Endothelial cell of umbilical vein (primary cell): ENCODE measurements at regions of chr11 and their contacts with region 1.

Region 1: DNA sequence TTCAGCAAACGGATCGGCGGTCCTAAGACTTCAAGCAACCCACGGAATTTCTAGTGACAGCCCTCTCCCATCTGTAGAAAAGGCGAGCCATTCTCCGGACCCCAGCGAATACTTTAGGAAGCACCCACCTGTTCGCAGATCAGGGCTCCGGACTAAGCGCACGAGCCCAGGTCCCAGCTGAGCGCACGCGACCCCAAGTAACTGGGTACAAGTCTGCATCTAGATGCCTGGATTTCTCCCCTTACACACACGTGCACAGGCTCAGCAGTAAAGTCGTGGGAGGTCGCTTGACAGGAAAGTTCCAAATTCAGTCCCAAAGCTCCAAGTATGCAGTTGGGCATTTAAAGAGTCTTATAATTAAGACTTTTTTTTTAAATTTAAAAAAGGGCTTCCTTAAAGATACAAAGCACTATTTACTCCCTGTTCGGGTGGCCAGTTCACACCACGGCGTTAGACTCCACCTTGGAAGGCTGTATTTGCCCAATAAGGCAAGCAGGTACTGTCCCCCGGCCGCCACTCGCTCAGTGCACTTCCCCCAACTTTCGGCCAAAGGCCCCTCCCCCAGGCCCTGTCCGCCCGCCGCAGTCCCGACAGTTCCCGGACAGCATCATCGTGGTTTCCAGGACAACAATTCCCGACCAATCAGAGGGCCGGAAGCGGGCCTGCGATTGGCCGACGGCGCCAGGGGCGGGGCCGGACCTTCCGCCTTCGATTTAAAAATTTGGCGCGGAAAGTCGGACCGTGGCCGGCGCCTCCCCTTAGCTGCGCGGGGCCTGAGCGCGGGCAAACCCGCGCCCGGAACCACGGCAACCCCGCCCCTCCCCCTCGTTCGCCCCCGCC is at the start of gene E2F8:
- DNase-seq: peak; percentile 96
- H3K4me3 ChIP-seq: peak within 1 kb of the TSS; percentile 88 to 92 (median 88)
- H3K27ac ChIP-seq: peak within 1 kb of the TSS; percentile 44
- H3K4me1 ChIP-seq: peaks cover 22% of the 10 kb centered on the region
- H3K27me3 ChIP-seq: no peaks in the 10 kb centered on the region
- CTCF ChIP-seq: no peak
- POLR2A ChIP-seq: peak; percentile 41
- total RNA-seq, gene E2F8: 16.5 and 19.1 TPM in 2 replicates

Region 2: DNA sequence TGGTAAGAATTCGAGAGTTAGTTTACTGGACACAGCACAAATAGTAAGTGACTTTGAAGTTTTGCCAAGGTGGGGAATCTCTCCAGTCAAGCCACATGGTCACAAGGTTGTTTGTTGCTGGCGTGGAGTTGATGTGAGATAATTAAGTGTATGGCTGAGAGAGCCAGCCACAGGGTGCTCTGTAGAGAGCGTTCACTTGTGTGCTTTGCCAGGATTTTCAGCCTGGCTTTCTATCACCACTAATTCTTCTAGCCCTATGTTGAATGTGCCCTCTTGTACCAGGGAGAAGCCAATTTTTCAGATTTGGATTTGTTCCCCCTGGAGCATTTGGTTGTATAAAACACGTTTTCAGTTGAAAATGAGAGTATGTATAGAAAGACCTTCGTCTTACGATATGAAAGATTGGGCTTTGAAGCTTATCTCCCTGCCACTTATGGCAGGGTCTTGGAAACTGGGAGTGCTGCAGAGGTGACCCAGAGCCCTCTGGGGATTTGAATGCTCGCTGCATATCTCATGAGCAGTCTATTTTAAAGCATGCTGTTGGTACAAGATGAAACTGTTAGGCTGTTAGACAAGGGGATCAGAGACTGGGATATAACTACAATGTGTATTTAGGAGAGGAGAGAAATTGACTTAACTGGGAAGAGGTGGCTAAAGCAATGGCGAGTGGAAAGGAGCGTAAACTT is 67.5 kb before region 1 on chr11:
- CTCF ChIA-PET with region 1: interaction called, 5 read pairs
- POLR2A ChIA-PET with region 1: no interaction called
- dilution Hi-C with region 1: no loop called
- intact Hi-C with region 1: loop called (anchors 5 kb)
- DNase-seq: no peak
- H3K4me3 ChIP-seq: no peak overlapping the region
- H3K27ac ChIP-seq: no peak overlapping the region
- H3K4me1 ChIP-seq: peaks cover 9% of the 10 kb centered on the region
- H3K27me3 ChIP-seq: no peaks in the 10 kb centered on the region
- CTCF ChIP-seq: no peak
- POLR2A ChIP-seq: no peak

Region 3: DNA sequence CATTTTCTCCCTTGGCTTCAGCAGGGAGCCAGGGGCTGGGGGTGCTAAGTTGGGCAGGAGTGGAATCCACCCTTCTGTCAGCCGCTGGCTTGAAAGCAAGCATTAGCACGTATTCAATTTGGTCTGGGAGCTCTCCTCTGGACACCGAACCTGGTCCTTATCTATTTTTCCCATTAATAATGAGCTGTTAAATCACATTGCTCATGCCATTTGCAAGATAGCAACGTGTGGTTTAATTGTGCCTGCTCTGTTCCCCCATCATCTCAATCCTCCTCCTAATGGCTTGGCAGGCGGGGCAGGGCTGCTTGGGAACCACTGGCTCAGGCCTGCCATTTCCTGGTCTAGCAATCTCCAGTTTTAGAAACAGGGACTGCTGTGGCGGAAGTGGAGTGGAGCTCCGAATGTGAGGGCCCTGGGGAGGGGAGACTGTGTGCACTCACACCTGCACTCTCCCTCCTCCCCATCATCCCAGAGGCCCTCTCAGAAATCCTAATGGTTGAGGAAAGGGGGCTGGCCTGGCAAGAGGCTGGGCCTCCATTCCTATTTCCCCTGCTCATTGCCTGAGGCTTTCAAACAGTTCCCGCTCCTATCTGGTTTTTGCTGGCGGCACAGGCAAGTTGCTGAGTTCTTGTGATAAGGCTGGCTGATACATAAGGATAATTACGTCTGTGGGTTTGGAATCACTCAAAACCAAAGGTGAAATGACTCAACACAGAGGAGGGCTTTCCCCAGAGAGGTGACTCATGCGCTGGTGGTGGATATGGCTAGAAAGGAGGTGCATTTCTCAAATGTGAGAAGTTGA is 201.3 kb after region 1 on chr11:
- CTCF ChIA-PET with region 1: no interaction called
- POLR2A ChIA-PET with region 1: no interaction called
- dilution Hi-C with region 1: no loop called
- intact Hi-C with region 1: loop called (anchors 5 kb)
- DNase-seq: peak; percentile 94
- H3K4me3 ChIP-seq: no peak overlapping the region
- H3K27ac ChIP-seq: peak overlapping the region; percentile 61
- H3K4me1 ChIP-seq: peaks cover 35% of the 10 kb centered on the region
- H3K27me3 ChIP-seq: no peaks in the 10 kb centered on the region
- CTCF ChIP-seq: no peak
- POLR2A ChIP-seq: no peak